ENCODE measurements at regions of chrX and their contacts with region 1.

Region 1: GRCh38 chrX:154002215-154002719 is 17.4 kb downstream of the IRAK1 start:
- DNase-seq: peak; percentile 42 to 89 (median 66)
- ATAC-seq: peak; percentile 92
- H3K4me3 ChIP-seq: no peak overlapping the region
- H3K27ac ChIP-seq: peak overlapping the region; percentile 97
- H3K4me1 ChIP-seq: peaks cover 12 to 18% of the 10 kb centered on the region in 2 experiments; a peak in 4 of 5 replicates
- H3K27me3 ChIP-seq: no peaks in the 10 kb centered on the region
- CTCF ChIP-seq: no peak
- EP300 ChIP-seq: no peak
- POLR2A ChIP-seq: peak; percentile 60
- RAD21 ChIP-seq: no peak

Region 2: GRCh38 chrX:153845842-153846241 is 156.4 kb before region 1 on chrX:
- CTCF ChIA-PET with region 1: no interaction called
- POLR2A ChIA-PET with region 1: no interaction called
- in situ Hi-C with region 1: no loop called
- intact Hi-C with region 1: no loop called
- DNase-seq: no peak
- ATAC-seq: no peak
- H3K4me3 ChIP-seq: no peak overlapping the region
- H3K27ac ChIP-seq: no peak overlapping the region
- H3K4me1 ChIP-seq: no peaks in the 10 kb centered on the region
- H3K27me3 ChIP-seq: no peaks in the 10 kb centered on the region
- CTCF ChIP-seq: no peak
- EP300 ChIP-seq: no peak
- POLR2A ChIP-seq: no peak
- RAD21 ChIP-seq: no peak

Region 3: DNA sequence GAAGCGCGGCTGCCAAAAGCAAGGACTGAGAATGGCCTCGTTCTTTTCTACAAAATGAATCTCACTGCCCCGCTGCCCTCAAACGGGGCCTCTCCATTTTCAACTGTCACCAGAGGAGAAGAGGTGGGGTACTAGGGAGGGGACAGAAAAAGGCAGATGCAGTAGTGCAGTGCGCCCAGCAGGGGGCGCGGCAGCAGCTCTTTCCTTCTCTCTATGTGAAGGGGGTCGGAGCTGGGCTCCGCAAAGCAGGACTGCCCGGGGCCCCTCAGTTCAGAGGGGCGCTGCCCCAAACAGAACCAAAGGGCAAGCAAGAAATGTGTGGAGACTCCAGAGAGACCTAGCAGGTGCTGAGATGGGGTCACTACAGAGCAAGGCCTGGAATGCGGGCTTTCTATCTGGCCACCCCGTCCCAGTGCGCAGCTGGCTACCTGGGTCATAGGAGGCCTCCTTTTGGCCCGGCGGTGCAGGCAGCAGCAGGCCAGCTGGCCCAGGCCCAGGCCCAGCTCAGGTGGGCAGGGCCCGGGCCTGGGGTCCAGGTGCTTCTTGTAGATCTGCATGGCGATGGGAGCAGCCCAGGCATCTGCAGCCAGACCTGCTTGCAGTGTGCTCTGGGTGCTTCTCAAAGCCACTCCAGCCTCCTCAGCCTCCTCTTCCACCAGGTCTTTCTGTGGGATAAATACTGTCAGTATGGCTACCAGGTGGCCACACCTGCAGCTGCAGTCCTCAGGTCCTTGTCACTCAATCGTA is 11.5 kb after region 1 on chrX:
- CTCF ChIA-PET with region 1: no interaction called
- POLR2A ChIA-PET with region 1: interaction called, 23 read pairs
- in situ Hi-C with region 1: no loop called
- intact Hi-C with region 1: no loop called
- DNase-seq: peak; percentile 60 to 72 (median 66)
- ATAC-seq: peak; percentile 82
- H3K4me3 ChIP-seq: no peak overlapping the region
- H3K27ac ChIP-seq: peak overlapping the region; percentile 36; the same call in 1 of the 3 replicates
- H3K4me1 ChIP-seq: peaks cover 6 to 71% of the 10 kb centered on the region in 2 experiments
- H3K27me3 ChIP-seq: no peaks in the 10 kb centered on the region
- CTCF ChIP-seq: peak; percentile 65 to 90 (median 73)
- EP300 ChIP-seq: no peak
- POLR2A ChIP-seq: no peak
- RAD21 ChIP-seq: peak; percentile 23 to 60; a peak in 2 of 4 replicates

Region 4: DNA sequence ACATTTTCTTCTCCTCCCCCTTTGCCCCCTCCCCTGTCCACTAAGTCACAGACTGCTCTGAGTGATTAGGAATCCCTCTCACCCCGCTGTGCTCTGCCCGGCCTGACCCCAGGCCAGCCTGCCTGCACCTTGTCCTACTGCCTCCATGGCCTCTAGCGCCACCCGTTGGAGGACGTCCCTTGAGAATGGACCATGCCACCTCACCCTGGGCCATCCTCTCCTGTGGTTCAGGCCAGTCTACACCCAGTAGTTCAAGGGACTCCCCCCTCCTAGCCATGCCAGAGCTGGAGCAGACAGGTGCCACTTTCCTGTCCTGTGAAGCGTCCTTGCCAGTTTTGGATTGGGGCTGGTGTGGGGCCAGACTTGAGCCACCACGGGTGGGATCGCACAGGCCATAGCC is 27.2 kb after region 1 on chrX:
- CTCF ChIA-PET with region 1: no interaction called
- POLR2A ChIA-PET with region 1: no interaction called
- in situ Hi-C with region 1: no loop called
- intact Hi-C with region 1: no loop called
- DNase-seq: peak in 2 of 4 experiments; percentile 31 to 34
- ATAC-seq: peak; percentile 81
- H3K4me3 ChIP-seq: no peak overlapping the region
- H3K27ac ChIP-seq: no peak overlapping the region
- H3K4me1 ChIP-seq: peaks cover 0 to 5% of the 10 kb centered on the region in 2 experiments; a peak in 2 of 5 replicates
- H3K27me3 ChIP-seq: no peaks in the 10 kb centered on the region
- CTCF ChIP-seq: peak; percentile 34 to 36 (median 35); a peak in 3 of 6 replicates
- EP300 ChIP-seq: no peak
- POLR2A ChIP-seq: no peak
- RAD21 ChIP-seq: peak in 1 of 2 experiments; percentile 29; a peak in 1 of 4 replicates

Region 5: GRCh38 chrX:154125391-154126040 is 123.2 kb after region 1 on chrX:
- CTCF ChIA-PET with region 1: no interaction called
- POLR2A ChIA-PET with region 1: no interaction called
- in situ Hi-C with region 1: no loop called
- intact Hi-C with region 1: no loop called
- DNase-seq: peak in 2 of 4 experiments; percentile 14 to 49
- ATAC-seq: peak; percentile 31
- H3K4me3 ChIP-seq: no peak overlapping the region
- H3K27ac ChIP-seq: peak overlapping the region; percentile 50; the same call in 1 of the 3 replicates
- H3K4me1 ChIP-seq: peaks cover 29% of the 10 kb centered on the region in 2 experiments; a peak in 4 of 5 replicates
- H3K27me3 ChIP-seq: no peaks in the 10 kb centered on the region
- CTCF ChIP-seq: no peak
- EP300 ChIP-seq: no peak
- POLR2A ChIP-seq: no peak
- RAD21 ChIP-seq: no peak